Caco-2 (cell line): ENCODE measurements at regions of chr15 and their contacts with region 1.

Region 1: GRCh38 chr15:85730001-85730820 is 64.5 kb downstream of the KLHL25 start:
- DNase-seq: peak in 1 of 2 experiments; percentile 57
- H3K4me3 ChIP-seq: no peak overlapping the region
- H3K4me3 Mint-ChIP-seq: no peak overlapping the region
- H3K27ac Mint-ChIP-seq: no peak overlapping the region
- H3K4me1 ChIP-seq: peaks cover 12% of the 10 kb centered on the region; the same call in 1 of the 2 replicates
- H3K4me1 Mint-ChIP-seq: peaks cover 14% of the 10 kb centered on the region
- H3K27me3 ChIP-seq: no peaks in the 10 kb centered on the region
- H3K27me3 Mint-ChIP-seq: no peaks in the 10 kb centered on the region
- CTCF ChIP-seq: peak; percentile 53 to 65

Region 2: DNA sequence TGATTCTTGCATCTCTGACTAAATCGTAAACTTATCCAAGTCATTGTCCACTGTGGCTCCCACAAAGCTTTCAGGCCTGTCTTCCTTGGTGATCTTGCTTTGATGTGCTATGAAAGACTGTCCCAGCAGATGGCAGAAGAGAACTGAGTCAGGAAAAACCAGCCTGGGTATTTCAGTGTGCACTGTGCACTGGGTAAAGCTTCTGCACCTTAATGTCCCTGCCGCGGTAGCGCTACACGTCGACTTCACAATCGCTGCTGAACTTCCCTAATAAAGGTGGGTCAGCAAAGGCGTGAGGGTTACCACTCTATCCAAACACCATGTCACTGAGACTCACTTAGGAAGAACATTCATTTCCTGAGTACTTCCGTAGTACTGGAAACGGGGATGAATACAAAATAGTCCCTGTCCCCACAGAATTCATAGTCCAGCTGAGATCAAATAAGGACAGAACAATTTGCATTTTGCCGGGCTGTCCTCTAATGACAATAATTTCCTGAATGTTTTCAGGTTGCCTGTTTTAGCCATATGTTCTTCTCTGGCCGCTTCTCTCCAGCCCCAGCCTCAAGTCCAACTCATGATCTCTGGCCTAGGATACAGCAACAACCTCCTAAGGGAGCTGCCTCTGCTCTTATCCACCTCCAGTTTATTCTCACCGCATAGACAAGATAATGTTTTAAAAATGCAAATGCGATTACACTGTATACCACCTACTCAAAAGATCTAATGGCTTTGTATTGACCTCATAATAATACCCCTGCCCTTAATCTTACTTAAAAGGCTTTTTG is 433.4 kb before region 1 on chr15:
- CTCF ChIA-PET with region 1: no interaction called
- POLR2A ChIA-PET with region 1: no interaction called
- intact Hi-C with region 1: loop called (anchors 5 kb)
- DNase-seq: peak; percentile 70 to 79
- H3K4me3 ChIP-seq: peak overlapping the region; percentile 10; the same call in 1 of the 2 replicates
- H3K4me3 Mint-ChIP-seq: peak overlapping the region; percentile 48
- H3K27ac Mint-ChIP-seq: peak overlapping the region; percentile 15
- H3K4me1 ChIP-seq: no peaks in the 10 kb centered on the region
- H3K4me1 Mint-ChIP-seq: peaks cover 7% of the 10 kb centered on the region
- H3K27me3 ChIP-seq: no peaks in the 10 kb centered on the region
- H3K27me3 Mint-ChIP-seq: peaks cover 2% of the 10 kb centered on the region
- CTCF ChIP-seq: peak; percentile 68 to 76

Region 3: DNA sequence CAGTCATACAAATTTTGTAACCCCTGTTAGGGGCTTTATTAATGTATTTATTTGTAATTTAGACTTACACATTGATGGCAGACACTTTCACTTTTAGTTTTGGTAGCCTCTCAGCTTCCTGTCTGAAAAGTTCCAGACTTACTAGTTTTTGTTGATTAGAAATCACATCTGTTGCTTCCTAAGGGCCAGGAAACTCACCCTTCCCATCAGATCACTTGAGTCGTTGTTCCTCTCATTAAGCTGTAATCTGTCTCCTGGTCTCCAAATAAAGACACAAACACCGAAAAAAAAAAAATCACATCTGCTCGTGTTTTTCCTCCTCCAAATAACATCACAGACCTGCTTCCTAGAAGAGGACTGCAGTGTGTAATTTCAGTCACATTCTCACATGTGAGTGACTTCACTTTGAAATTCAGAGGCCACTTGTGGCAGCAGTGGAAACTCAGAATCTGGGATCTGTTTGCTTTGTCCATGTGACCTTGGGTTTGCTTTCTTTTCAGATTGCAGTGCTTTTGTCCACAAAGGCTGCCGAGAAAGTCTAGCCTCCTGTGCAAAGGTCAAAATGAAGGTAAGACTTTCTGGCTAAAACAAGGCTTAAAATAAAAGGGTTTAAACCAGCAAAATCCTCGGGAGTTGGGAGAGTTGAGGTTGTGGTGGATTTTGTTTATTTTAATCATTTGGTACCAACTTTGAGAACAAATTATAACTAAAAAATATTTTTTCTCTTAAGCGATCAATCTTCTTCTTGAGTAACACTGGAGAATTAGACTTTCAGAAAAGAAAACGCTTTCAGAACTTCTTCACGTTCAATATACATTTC is 22.5 kb before region 1 on chr15:
- CTCF ChIA-PET with region 1: no interaction called
- POLR2A ChIA-PET with region 1: no interaction called
- intact Hi-C with region 1: loop called (anchors 2 kb)
- DNase-seq: peak; percentile 65 to 71
- H3K4me3 ChIP-seq: no peak overlapping the region
- H3K4me3 Mint-ChIP-seq: peak overlapping the region; percentile 66
- H3K27ac Mint-ChIP-seq: peak overlapping the region; percentile 77
- H3K4me1 ChIP-seq: peaks cover 32% of the 10 kb centered on the region
- H3K4me1 Mint-ChIP-seq: peaks cover 35% of the 10 kb centered on the region
- H3K27me3 ChIP-seq: no peaks in the 10 kb centered on the region
- H3K27me3 Mint-ChIP-seq: no peaks in the 10 kb centered on the region
- CTCF ChIP-seq: no peak

Region 4: DNA sequence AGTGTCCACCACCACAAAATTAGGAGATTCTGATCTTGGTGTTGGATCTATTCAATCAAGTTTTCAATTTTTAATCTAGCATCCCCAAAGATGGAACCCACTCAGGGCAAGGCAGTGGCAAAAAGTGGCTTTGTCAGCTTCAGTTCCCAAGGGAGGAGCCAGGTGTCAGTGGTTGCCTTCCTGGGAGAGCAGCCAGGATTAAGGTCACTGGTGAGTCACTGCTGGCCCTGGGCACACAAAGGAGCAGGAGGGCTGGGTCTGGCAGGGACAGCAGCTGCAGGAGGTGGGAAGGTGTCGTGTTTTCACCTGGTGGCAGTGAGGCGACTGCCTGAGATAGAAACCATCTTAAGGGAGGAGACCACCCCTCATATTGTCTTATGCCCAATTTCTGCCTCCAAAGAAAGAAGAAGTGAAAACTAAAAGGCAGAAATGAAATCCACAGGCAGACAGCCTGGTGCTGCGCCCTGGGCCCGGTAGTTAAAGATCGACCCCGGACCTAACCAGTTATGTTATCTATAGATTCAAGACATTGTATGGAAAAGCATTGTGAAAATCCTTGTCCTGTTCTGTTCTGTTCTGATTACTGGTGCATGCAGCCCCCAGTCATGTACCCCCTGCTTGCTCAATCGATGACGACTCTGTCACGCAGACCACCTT is 70.4 kb after region 1 on chr15:
- CTCF ChIA-PET with region 1: no interaction called
- POLR2A ChIA-PET with region 1: no interaction called
- intact Hi-C with region 1: loop called (anchors 1 kb)
- DNase-seq: peak; percentile 80 to 84
- H3K4me3 ChIP-seq: no peak overlapping the region
- H3K4me3 Mint-ChIP-seq: peak overlapping the region; percentile 20
- H3K27ac Mint-ChIP-seq: peak overlapping the region; percentile 78
- H3K4me1 ChIP-seq: peaks cover 21% of the 10 kb centered on the region
- H3K4me1 Mint-ChIP-seq: peaks cover 17% of the 10 kb centered on the region
- H3K27me3 ChIP-seq: no peaks in the 10 kb centered on the region
- H3K27me3 Mint-ChIP-seq: no peaks in the 10 kb centered on the region
- CTCF ChIP-seq: peak; percentile 27 to 75

Region 5: GRCh38 chr15:85831415-85832113 is 101.4 kb after region 1 on chr15:
- CTCF ChIA-PET with region 1: no interaction called
- POLR2A ChIA-PET with region 1: no interaction called
- intact Hi-C with region 1: loop called (anchors 1 kb)
- DNase-seq: peak; percentile 58
- H3K4me3 ChIP-seq: no peak overlapping the region
- H3K4me3 Mint-ChIP-seq: no peak overlapping the region
- H3K27ac Mint-ChIP-seq: no peak overlapping the region
- H3K4me1 ChIP-seq: peaks cover 7% of the 10 kb centered on the region; the same call in 1 of the 2 replicates
- H3K4me1 Mint-ChIP-seq: peaks cover 8% of the 10 kb centered on the region
- H3K27me3 ChIP-seq: no peaks in the 10 kb centered on the region
- H3K27me3 Mint-ChIP-seq: no peaks in the 10 kb centered on the region
- CTCF ChIP-seq: peak; percentile 38 to 62

Region 6: DNA sequence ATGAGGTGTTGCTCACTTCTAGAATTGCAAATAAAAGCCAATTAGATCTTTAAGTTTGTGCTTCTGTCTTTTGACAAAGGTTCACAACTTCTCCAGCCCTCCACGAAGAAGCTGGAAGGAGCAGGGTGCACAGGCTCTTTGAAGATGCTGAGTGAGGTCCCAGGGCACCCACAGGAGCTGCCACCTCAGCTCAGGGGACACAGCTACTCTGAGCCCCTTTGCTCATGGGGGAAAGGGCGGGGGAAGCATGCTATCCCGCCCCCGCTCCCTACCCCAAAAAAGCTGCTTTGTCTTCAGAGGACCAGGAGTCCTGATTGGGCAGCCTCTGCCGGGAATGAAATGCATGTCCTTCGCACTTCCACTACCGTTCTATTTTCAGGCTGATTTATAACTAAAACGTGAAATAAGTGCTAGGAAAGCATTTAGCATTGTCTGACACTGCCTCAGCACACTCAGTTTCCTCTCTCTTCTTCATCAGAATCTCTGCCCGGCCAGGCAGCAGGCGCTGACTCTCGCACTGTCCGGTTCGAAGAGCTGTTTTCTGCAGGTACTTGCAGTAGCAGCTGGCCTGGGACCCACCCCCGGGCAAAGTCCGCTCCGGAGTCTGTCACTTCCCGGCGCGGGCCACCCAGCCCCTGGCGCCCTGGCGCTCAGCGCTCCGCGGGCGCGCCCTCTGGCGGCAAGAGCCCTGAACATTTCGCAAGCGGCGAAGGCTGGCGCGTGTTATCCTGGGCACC is 110.0 kb after region 1 on chr15:
- CTCF ChIA-PET with region 1: interaction called, 10 read pairs
- POLR2A ChIA-PET with region 1: no interaction called
- intact Hi-C with region 1: loop called (anchors 1 kb)
- DNase-seq: peak; percentile 93 to 96
- H3K4me3 ChIP-seq: peak overlapping the region; percentile 23; the same call in 1 of the 2 replicates
- H3K4me3 Mint-ChIP-seq: peak overlapping the region; percentile 67
- H3K27ac Mint-ChIP-seq: peak overlapping the region; percentile 86
- H3K4me1 ChIP-seq: peaks cover 30% of the 10 kb centered on the region
- H3K4me1 Mint-ChIP-seq: peaks cover 34% of the 10 kb centered on the region
- H3K27me3 ChIP-seq: no peaks in the 10 kb centered on the region
- H3K27me3 Mint-ChIP-seq: no peaks in the 10 kb centered on the region
- CTCF ChIP-seq: peak; percentile 86 to 93